CD8-positive, alpha-beta T cell (primary cell): ENCODE measurements at regions of chrX and their contacts with region 1.

Region 1: DNA sequence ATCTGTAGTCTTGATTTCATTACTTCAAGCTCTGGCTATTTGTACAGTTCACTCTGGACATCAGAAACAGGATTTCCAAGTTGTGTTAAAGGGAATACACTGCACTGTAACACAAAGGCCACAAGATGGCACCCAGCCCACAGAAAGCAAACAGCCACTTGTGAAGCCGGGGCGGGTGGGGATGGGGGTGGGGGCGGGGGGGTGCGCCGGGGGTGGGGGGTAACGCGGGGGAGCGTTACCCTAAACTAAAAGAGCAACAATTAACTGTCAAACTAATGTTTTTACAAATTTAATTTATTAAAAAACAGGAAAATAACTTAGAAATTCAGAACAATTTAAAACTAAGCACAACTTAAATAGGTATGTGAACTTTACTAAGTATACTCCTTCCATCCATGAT is 27.3 kb downstream of the PRDX4 start:
- DNase-seq: peak in 8 of 9 experiments; percentile 8 to 69 (median 36)
- ATAC-seq: peak; percentile 71
- H3K4me3 ChIP-seq: no peak overlapping the region
- H3K4me3 Mint-ChIP-seq: no peak overlapping the region
- H3K27ac ChIP-seq: no peak overlapping the region
- H3K27ac Mint-ChIP-seq: no peak overlapping the region
- H3K4me1 ChIP-seq: no peaks in the 10 kb centered on the region
- H3K4me1 Mint-ChIP-seq: peaks cover 4% of the 10 kb centered on the region
- H3K27me3 ChIP-seq: no peaks in the 10 kb centered on the region
- H3K27me3 Mint-ChIP-seq: no peaks in the 10 kb centered on the region
- CTCF ChIP-seq: peak; percentile 39

Region 2: GRCh38 chrX:22314631-22315062 is 1380.0 kb before region 1 on chrX:
- CTCF ChIA-PET with region 1: no interaction called
- POLR2A ChIA-PET with region 1: no interaction called
- intact Hi-C with region 1: no loop called
- DNase-seq: no peak
- ATAC-seq: no peak
- H3K4me3 ChIP-seq: no peak overlapping the region
- H3K4me3 Mint-ChIP-seq: no peak overlapping the region
- H3K27ac ChIP-seq: no peak overlapping the region
- H3K27ac Mint-ChIP-seq: no peak overlapping the region
- H3K4me1 ChIP-seq: no peaks in the 10 kb centered on the region
- H3K4me1 Mint-ChIP-seq: no peaks in the 10 kb centered on the region
- H3K27me3 ChIP-seq: no peaks in the 10 kb centered on the region
- H3K27me3 Mint-ChIP-seq: no peaks in the 10 kb centered on the region
- CTCF ChIP-seq: no peak

Region 3: DNA sequence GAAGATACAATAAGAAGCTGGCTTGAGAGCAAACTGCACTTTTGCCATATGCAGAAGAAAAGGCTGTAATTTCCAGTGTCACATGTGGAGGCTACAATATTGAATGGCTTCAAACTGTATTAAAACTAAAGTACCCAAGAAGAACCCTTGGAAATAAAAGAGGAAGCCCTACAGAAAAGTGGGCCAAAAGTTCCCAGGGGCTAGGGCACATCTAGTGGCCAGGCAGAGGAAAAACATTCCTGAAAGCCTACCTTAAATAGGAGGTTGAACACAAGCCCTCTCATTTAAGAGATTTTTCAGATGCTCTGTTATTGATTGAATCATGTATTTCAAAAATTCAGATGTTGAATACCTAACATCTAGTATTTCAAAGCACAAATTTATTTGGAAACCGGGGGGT is 68.0 kb before region 1 on chrX:
- CTCF ChIA-PET with region 1: no interaction called
- POLR2A ChIA-PET with region 1: no interaction called
- intact Hi-C with region 1: no loop called
- DNase-seq: no peak
- ATAC-seq: no peak
- H3K4me3 ChIP-seq: no peak overlapping the region
- H3K4me3 Mint-ChIP-seq: no peak overlapping the region
- H3K27ac ChIP-seq: no peak overlapping the region
- H3K27ac Mint-ChIP-seq: no peak overlapping the region
- H3K4me1 ChIP-seq: no peaks in the 10 kb centered on the region
- H3K4me1 Mint-ChIP-seq: no peaks in the 10 kb centered on the region
- H3K27me3 ChIP-seq: no peaks in the 10 kb centered on the region
- H3K27me3 Mint-ChIP-seq: peaks cover 7% of the 10 kb centered on the region
- CTCF ChIP-seq: no peak

Region 4: DNA sequence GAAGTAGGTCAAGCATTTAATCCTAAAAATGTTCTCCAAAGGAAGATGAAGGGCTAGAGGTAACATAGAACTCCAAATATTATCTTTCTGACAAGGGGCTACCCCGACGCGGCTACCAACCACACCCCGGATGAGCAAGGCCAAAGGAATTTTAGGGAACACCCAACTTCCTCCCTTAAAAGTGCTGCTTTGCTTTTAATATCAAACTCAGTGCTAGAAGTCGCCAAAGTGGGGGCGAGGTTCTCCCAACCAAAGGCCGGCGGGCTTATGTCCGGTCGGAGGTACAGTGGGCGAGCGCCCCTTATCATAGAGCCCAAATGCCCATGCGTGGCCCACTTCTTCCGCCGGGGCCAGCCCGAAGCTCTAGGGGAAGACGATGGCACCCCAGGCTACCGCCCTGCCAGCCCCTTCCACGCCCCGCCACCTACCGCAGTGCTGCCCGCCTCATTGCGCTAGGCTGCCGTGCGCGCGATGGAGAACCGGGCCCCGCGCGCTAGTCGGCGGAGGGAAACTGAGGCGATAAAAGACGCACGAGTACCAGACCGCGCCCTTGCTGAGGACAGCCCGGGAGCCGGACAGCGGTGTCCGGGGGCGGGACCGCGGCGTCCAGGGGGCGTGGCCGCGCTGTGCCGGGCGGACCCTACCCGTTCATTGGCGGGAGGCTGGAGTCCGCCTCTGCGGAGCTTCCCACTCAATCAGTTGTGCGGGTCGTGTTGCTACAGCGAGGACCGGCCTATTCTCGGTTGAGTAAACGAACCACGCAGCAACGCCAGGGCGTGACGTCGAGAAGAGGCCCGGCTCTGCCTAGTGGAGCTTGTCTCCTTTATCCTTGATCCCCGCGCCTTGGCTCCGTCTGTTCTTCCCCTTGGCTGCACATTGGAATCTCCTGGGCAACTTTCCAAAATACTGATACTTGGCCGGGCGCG is 48.4 kb after region 1 on chrX and contains the start of gene ACOT9:
- CTCF ChIA-PET with region 1: no interaction called
- POLR2A ChIA-PET with region 1: no interaction called
- intact Hi-C with region 1: loop called in 1 of 2 experiments (anchors 5 kb)
- DNase-seq: peak; percentile 32 to 83 (median 60)
- ATAC-seq: peak; percentile 87
- H3K4me3 ChIP-seq: peak within 1 kb of the TSS; percentile 72 to 75
- H3K4me3 Mint-ChIP-seq: peak within 1 kb of the TSS; percentile 87
- H3K27ac ChIP-seq: peak within 1 kb of the TSS; percentile 51 to 66
- H3K27ac Mint-ChIP-seq: peak within 1 kb of the TSS; percentile 84
- H3K4me1 ChIP-seq: peaks cover 8% of the 10 kb centered on the region
- H3K4me1 Mint-ChIP-seq: peaks cover 35% of the 10 kb centered on the region
- H3K27me3 ChIP-seq: no peaks in the 10 kb centered on the region
- H3K27me3 Mint-ChIP-seq: no peaks in the 10 kb centered on the region
- CTCF ChIP-seq: no peak
- total RNA-seq, gene ACOT9: 19.3 to 21.3 TPM

Region 5: GRCh38 chrX:23756157-23756559 is 61.6 kb after region 1 on chrX:
- CTCF ChIA-PET with region 1: no interaction called
- POLR2A ChIA-PET with region 1: no interaction called
- intact Hi-C with region 1: loop called in 1 of 2 experiments (anchors 10 kb)
- DNase-seq: peak; percentile 27 to 79 (median 62)
- ATAC-seq: no peak
- H3K4me3 ChIP-seq: no peak overlapping the region
- H3K4me3 Mint-ChIP-seq: no peak overlapping the region
- H3K27ac ChIP-seq: no peak overlapping the region
- H3K27ac Mint-ChIP-seq: no peak overlapping the region
- H3K4me1 ChIP-seq: no peaks in the 10 kb centered on the region
- H3K4me1 Mint-ChIP-seq: peaks cover 3% of the 10 kb centered on the region
- H3K27me3 ChIP-seq: no peaks in the 10 kb centered on the region
- H3K27me3 Mint-ChIP-seq: no peaks in the 10 kb centered on the region
- CTCF ChIP-seq: peak; percentile 37

Region 6: GRCh38 chrX:23901805-23902204 is 207.2 kb after region 1 on chrX:
- CTCF ChIA-PET with region 1: interaction called, 66 read pairs
- POLR2A ChIA-PET with region 1: no interaction called
- intact Hi-C with region 1: loop called (anchors 1 kb)
- DNase-seq: peak in 6 of 9 experiments; percentile 6 to 66 (median 34)
- ATAC-seq: peak; percentile 80
- H3K4me3 ChIP-seq: no peak overlapping the region
- H3K4me3 Mint-ChIP-seq: no peak overlapping the region
- H3K27ac ChIP-seq: no peak overlapping the region
- H3K27ac Mint-ChIP-seq: no peak overlapping the region
- H3K4me1 ChIP-seq: peaks cover 6% of the 10 kb centered on the region
- H3K4me1 Mint-ChIP-seq: peaks cover 5% of the 10 kb centered on the region
- H3K27me3 ChIP-seq: no peaks in the 10 kb centered on the region
- H3K27me3 Mint-ChIP-seq: no peaks in the 10 kb centered on the region
- CTCF ChIP-seq: no peak

Region 7: GRCh38 chrX:24241822-24242648 is 547.4 kb after region 1 on chrX:
- CTCF ChIA-PET with region 1: no interaction called
- POLR2A ChIA-PET with region 1: no interaction called
- intact Hi-C with region 1: loop called (anchors 5 to 10 kb)
- DNase-seq: peak in 2 of 9 experiments; percentile 37 to 53
- ATAC-seq: no peak
- H3K4me3 ChIP-seq: no peak overlapping the region
- H3K4me3 Mint-ChIP-seq: no peak overlapping the region
- H3K27ac ChIP-seq: no peak overlapping the region
- H3K27ac Mint-ChIP-seq: no peak overlapping the region
- H3K4me1 ChIP-seq: no peaks in the 10 kb centered on the region
- H3K4me1 Mint-ChIP-seq: no peaks in the 10 kb centered on the region
- H3K27me3 ChIP-seq: no peaks in the 10 kb centered on the region
- H3K27me3 Mint-ChIP-seq: no peaks in the 10 kb centered on the region
- CTCF ChIP-seq: no peak